Activated T-helper 1 cell treated with anti-CD3 and anti-CD28 coated beads, Interleukin-12 subunit alpha, Interleukin-12 subunit beta, Interleukin-2, Interleukin-4 antibody, amounts not matched to agents 30 ng/mL and 10 ng/mL and 1 ng/mL, durations not matched to agents 14 hours and 24 hours and 36 hours (primary cell): ENCODE measurements at regions of chr14 and their contacts with region 1.

Region 1: DNA sequence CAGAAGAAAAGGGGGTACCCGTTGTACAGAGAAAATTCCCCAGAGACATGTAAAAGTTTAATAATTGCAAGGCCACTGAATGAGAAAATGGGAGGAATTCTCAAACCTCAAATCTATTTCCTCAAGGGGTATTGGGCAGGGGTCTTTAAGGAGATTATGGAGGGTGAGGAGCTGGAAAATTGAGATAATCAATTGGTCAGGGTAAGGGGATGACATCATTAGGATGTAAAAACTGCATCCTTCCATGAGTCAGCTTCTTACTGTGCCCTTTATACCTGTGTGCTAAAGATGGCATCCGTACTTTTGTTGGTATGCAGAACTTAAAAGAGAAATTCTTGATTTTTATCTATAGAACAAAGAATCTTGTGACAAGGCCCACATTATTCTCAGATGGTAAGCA is 641.5 kb downstream of the LRFN5 start:
- DNase-seq: no peak
- H3K4me3 Mint-ChIP-seq: no peak overlapping the region
- H3K27ac Mint-ChIP-seq: no peak overlapping the region
- H3K4me1 Mint-ChIP-seq: no peaks in the 10 kb centered on the region
- H3K27me3 Mint-ChIP-seq: no peaks in the 10 kb centered on the region

Region 2: GRCh38 chr14:42229976-42230375 is 18.2 kb before region 1 on chr14:
- intact Hi-C with region 1: no loop called
- DNase-seq: no peak
- H3K4me3 Mint-ChIP-seq: no peak overlapping the region
- H3K27ac Mint-ChIP-seq: no peak overlapping the region
- H3K4me1 Mint-ChIP-seq: no peaks in the 10 kb centered on the region
- H3K27me3 Mint-ChIP-seq: no peaks in the 10 kb centered on the region

Region 3: DNA sequence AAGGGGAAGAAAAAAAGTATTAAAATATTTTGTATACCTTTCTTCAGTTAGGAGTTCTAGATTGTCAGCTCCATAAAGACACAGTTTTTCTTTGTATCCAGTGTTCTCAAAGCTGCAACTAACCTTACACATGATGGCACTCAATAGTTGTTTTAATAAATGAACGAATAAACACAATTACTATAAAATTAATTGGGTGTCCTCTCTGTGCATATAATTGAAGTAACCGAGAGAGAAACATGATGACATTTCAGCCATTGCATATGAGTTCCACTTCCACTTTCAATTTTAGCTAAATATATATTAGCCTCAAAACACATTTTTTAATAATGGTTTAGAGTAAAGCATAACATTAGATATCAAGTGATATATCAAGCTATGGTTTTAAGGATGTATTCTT is 29.7 kb after region 1 on chr14:
- intact Hi-C with region 1: no loop called
- DNase-seq: no peak
- H3K4me3 Mint-ChIP-seq: no peak overlapping the region
- H3K27ac Mint-ChIP-seq: no peak overlapping the region
- H3K4me1 Mint-ChIP-seq: no peaks in the 10 kb centered on the region
- H3K27me3 Mint-ChIP-seq: no peaks in the 10 kb centered on the region

Region 4: GRCh38 chr14:42378271-42378670 is 130.1 kb after region 1 on chr14:
- intact Hi-C with region 1: loop called (anchors 10 kb)
- DNase-seq: no peak
- H3K4me3 Mint-ChIP-seq: no peak overlapping the region
- H3K27ac Mint-ChIP-seq: no peak overlapping the region
- H3K4me1 Mint-ChIP-seq: no peaks in the 10 kb centered on the region
- H3K27me3 Mint-ChIP-seq: no peaks in the 10 kb centered on the region